AG04449 (cell line): ENCODE measurements at regions of chr10 and their contacts with region 1.

Region 1: DNA sequence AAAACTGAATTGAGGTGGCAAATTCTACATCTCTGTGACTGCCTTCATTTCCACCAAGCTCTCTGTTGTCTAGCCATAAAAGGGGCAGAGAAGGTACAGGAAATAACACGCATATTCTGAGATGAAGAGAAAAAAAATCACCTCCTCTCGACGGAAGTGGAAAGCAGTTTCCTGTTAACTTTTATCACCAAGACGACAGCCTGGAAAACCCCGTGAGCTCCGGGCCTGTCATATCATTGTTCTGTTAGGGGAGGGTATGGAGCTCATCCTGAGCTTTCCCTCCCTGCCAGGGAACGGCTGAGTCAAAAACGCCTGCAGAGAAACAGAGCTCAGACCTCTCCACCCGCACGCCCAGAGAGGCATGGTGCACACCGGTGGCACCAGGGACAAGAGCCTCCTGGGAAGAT is 200.3 kb downstream of the PRPF18 start:
- DNase-seq: no peak
- H3K4me3 ChIP-seq: no peak overlapping the region
- CTCF ChIP-seq: no peak

Region 2: DNA sequence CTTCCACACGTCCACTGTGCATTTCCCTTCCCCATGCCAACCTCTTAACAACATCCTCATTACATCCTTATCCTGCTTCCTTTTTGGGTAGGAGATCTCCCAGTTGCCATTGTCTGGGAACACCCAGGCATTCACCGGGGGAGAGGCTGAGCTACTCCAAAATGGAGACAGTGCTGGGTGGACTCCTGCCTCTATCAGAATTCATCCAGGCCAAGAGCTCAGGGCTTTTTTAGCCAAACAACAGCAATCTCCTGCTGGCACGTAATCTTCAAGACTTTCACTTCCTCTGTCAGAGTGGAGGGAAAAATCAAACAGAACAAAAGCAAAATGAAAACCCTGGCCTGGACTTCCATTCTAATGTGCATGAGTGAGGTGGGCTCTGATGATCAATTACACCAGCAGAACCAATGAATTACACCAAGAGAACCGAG is 44.7 kb after region 1 on chr10:
- CTCF ChIA-PET with region 1: no interaction called
- POLR2A ChIA-PET with region 1: no interaction called
- DNase-seq: no peak
- H3K4me3 ChIP-seq: no peak overlapping the region
- CTCF ChIP-seq: no peak

Region 3: GRCh38 chr10:14093730-14094484 is 306.9 kb after region 1 on chr10:
- CTCF ChIA-PET with region 1: interaction called, 102 read pairs
- POLR2A ChIA-PET with region 1: no interaction called
- DNase-seq: no peak
- H3K4me3 ChIP-seq: no peak overlapping the region
- CTCF ChIP-seq: peak; percentile 38